HAP-1 (cell line): ENCODE measurements at regions of chr6 and their contacts with region 1.

Region 1: GRCh38 chr6:1396952-1397868 is 7.8 kb downstream of the FOXF2 start:
- DNase-seq: peak; percentile 85 to 87
- H3K4me3 ChIP-seq: no peak overlapping the region
- H3K4me1 ChIP-seq: peaks cover 6% of the 10 kb centered on the region
- H3K27me3 ChIP-seq: no peaks in the 10 kb centered on the region

Region 2: DNA sequence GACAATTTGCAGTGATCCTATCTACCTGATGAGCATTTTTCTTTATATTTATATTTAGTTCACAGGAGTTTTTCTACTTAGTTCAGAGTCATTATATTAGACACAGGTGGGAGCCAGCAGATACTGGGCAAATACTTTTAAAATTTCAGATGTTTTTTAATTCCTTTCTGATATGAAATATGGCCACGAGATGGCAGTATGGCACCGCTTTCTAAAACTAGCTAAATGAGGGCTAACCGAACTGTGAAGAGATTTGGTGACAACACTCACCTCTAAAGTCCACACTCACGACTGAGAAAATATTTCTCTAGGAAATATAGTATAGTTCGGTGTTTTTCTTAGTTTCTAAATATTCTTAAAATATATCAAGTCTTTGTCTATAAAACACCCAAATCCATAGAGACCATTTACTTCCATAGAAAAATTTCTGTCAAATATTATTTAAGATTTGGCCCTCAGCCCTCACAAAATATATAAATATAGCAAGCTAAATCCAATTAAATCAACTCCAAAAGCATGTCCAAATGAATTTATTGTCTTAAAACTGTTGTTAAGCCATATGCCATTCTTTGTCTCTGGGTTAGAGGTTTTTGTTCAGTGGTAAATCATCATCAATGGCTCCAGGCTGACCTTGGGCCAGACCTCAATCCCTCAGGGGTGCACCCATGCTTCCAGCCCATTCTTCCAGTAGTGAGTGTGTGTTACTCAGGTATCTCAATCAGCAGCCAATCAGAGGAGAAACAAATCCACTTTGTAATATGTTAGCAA is 803.9 kb before region 1 on chr6:
- in situ Hi-C with region 1: loop called (anchors 25 kb)
- DNase-seq: peak; percentile 67 to 73
- H3K4me3 ChIP-seq: no peak overlapping the region
- H3K4me1 ChIP-seq: no peaks in the 10 kb centered on the region
- H3K27me3 ChIP-seq: no peaks in the 10 kb centered on the region